HepG2 (cell line): ENCODE measurements at regions of chr21 and their contacts with region 1.

Region 1: GRCh38 chr21:29265690-29266479 is 32.8 kb upstream of the BACH1 start:
- DNase-seq: no peak
- ATAC-seq: no peak
- H3K4me3 ChIP-seq: no peak overlapping the region
- H3K27ac ChIP-seq: no peak overlapping the region
- H3K4me1 ChIP-seq: no peaks in the 10 kb centered on the region
- H3K27me3 ChIP-seq: no peaks in the 10 kb centered on the region
- CTCF ChIP-seq: no peak
- EP300 ChIP-seq: no peak
- POLR2A ChIP-seq: no peak
- RAD21 ChIP-seq: no peak

Region 2: DNA sequence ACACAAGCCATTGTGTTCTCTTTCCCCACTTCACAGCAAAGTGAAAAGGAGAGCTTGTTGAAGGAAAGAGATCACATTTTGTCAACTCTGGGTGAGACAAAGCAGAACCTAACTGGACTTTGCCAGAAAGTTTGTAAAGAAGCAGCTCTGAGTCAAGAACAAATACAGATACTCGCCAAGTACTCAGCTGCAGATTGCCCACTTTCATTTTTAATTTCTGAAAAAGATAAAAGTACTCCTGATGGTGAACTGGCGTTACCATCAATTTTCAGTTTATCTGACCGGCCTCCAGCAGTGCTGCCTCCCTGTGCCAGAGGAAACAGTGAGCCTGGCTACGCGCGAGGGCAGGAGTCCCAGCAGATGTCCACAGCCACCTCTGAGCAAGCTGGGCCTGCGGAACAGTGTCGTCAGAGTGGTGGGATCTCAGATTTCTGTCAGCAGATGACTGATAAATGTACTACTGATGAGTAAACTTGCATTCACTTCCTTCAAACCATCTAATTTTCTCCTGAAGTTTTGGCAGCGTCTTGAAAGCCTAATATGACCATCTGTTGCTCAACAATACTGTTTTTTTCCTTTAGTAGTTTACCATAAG is 76.6 kb after region 1 on chr21:
- CTCF ChIA-PET with region 1: no interaction called
- POLR2A ChIA-PET with region 1: no interaction called
- in situ Hi-C with region 1: no loop called
- intact Hi-C with region 1: loop called (anchors 10 kb)
- DNase-seq: no peak
- ATAC-seq: no peak
- H3K4me3 ChIP-seq: no peak overlapping the region
- H3K27ac ChIP-seq: no peak overlapping the region
- H3K4me1 ChIP-seq: peaks cover 14% of the 10 kb centered on the region
- H3K27me3 ChIP-seq: no peaks in the 10 kb centered on the region
- CTCF ChIP-seq: no peak
- EP300 ChIP-seq: no peak
- POLR2A ChIP-seq: no peak
- RAD21 ChIP-seq: no peak

Region 3: DNA sequence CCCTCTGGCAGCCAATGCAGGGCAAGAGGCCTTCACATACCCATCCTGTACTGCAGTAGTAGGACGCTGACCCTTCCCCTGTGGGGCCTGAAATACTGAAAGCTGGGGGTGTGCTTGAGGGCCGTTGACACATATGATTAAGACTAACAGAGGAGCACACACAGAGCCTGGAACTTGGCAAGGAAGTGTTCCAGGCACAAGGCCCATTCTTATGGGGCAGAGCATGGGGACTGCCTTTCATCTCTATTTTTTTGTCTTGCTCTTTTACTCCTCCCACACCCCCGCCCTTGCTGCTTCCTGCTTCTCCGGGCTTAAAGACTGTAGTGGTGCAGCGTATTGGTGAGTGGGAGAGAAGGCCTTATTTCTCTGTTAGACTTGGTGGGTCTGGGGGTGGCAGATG is 170.3 kb after region 1 on chr21:
- CTCF ChIA-PET with region 1: no interaction called
- POLR2A ChIA-PET with region 1: no interaction called
- in situ Hi-C with region 1: no loop called
- intact Hi-C with region 1: no loop called
- DNase-seq: no peak
- ATAC-seq: no peak
- H3K4me3 ChIP-seq: no peak overlapping the region
- H3K27ac ChIP-seq: no peak overlapping the region
- H3K4me1 ChIP-seq: no peaks in the 10 kb centered on the region
- H3K27me3 ChIP-seq: no peaks in the 10 kb centered on the region
- CTCF ChIP-seq: no peak
- EP300 ChIP-seq: no peak
- POLR2A ChIP-seq: no peak
- RAD21 ChIP-seq: no peak